Right ventricle myocardium inferior (tissue), 1 donor: ENCODE measurements at regions of chr12 and their contacts with region 1.

Region 1: DNA sequence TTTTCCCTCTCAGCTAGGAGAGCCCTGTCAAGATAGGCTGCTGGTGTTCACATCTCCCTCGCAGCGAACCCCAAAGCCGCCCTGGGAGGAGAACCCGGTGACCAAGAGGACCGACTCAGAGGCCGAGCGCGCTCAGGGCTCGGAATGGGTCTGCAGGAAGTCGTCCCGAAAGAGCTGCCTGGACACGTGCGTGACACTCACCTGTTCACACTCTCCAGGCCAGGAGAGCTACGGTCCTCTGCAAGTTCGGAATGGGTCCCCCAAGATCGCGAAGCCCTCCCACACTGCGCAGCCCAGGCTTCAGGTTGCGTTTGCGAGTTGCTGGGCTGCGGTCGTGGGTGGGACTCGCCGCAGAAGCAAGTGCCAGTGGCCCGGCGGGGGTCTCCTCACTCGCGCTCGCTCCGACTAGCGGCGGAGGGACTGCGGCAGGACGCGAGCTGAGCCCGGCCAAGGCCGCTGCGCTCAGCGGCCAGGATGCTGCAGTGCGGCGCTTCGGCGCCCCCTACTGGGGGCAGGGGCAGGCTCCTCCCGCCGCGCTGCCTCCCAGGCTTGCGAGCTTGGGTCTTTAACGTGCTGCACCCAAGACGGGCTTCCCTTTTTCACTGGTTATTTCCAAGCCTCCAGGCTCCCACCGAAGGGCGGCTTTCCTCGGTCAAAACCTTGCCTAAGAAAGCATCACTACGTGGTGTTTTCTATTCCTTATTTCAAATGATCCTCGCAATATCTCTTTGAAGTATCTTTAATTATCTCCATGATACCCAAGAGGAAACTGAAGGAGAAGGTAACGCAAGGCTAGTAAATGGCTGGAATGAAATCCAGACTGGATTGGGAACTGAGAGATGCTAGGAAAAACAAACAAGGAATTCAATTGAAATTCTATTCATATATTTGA is at the start of gene RERG:
- DNase-seq: peak; percentile 88
- ATAC-seq: peak; percentile 99
- total RNA-seq, gene RERG: 4.0 TPM

Region 2: GRCh38 chr12:14810953-14811483 is 410.2 kb before region 1 on chr12:
- intact Hi-C with region 1: loop called (anchors 5 kb)
- DNase-seq: no peak
- ATAC-seq: no peak

Region 3: DNA sequence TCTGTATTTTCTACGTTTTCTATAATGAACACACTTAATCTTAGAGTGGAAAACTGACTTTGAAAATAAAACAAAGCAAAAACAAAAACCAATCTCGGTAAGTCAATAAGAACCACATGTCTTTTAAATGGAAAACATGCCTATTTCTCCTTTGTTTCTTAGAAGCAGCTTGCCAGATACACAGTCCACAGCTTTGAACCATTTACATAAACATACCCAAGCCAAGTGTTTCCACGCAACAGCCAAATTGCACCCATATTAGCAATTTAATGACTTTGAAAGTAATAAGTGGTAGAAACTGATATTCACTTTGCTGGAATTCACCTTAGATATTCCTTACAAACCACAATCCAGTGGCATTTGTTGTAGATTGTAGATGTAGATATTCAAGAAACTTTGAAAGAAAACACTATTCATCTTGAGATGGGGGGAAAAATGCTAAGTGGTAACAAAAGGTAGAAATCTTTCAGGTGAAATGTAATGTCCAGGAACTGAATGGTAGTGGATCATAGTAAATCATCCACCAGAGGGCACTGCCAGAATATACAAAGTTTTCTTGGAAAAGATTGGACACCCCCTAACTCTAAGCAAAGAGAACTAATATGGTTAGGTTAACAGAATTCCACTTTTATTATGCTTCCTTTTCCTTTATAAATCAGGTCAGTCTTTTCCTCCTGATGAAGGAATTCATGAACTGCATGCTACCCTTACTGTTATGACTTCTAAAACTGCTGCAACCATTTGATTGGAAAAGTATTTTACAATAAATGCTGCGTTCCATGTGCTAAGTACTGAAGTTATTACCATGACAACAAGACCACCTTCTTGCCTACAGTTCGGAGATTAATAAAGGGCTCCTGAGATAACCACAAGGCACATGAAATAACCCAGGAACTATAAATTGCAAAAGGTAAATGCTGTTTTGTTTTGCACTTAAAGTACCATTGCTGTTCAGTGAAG is 69.8 kb before region 1 on chr12:
- intact Hi-C with region 1: loop called (anchors 2 kb)
- DNase-seq: no peak
- ATAC-seq: peak; percentile 78

Region 4: GRCh38 chr12:15268927-15269552 is 47.8 kb after region 1 on chr12:
- intact Hi-C with region 1: loop called (anchors 5 kb)
- DNase-seq: peak; percentile 11
- ATAC-seq: peak; percentile 46

Region 5: GRCh38 chr12:15621140-15621539 is 399.9 kb after region 1 on chr12:
- intact Hi-C with region 1: no loop called
- DNase-seq: no peak
- ATAC-seq: no peak